ENCODE measurements at regions of chr13 and their contacts with region 1.

Region 1: DNA sequence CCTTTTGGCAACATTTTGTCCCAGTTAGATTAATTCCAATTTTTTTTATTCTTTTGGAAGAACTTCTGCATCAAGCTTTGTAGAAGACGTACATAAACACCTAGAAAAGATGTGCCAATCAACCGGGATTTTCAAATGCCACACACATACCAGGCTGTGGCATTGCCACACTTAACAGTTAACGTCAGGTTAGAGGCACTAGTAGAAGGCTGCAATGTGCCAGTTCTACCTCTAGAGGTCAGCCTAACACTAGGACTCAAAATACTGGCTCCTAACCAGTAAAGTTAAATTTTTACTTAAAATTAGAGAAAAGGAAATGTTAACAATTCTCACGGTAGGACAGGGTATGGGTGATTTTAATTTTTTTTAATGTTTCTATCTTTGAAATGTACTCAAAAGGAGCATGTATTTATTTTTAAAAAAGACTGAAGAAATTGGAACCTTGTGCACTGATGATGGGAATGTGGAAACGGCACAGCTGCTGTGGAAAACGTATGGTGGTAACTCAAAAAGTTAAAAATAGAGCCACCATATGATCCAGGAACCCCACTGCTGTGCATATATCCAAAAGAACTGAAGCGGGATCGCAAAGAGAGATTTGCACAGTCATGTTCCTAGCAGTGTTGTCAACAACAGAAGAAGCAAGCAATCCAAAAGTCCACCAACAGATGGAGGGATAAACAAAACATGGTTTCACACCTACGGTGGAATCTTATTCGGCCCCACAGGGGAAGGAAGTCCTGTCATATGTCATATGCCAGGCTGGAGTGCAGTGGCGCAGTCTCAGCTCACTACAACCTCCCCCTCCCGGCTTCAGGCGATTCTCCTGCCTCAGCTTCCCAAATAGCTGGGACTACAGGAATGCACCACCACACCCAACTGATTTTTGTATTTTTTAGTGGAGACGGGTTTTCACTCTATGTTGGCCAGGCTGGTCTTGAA is 30.3 kb downstream of the CRYL1 start:
- DNase-seq: peak; percentile 76
- H3K4me3 ChIP-seq: no peak overlapping the region
- H3K27ac ChIP-seq: peak overlapping the region; percentile 34
- H3K4me1 ChIP-seq: peaks cover 4% of the 10 kb centered on the region
- H3K27me3 ChIP-seq: no peaks in the 10 kb centered on the region
- CTCF ChIP-seq: peak; percentile 73
- POLR2A ChIP-seq: no peak

Region 2: DNA sequence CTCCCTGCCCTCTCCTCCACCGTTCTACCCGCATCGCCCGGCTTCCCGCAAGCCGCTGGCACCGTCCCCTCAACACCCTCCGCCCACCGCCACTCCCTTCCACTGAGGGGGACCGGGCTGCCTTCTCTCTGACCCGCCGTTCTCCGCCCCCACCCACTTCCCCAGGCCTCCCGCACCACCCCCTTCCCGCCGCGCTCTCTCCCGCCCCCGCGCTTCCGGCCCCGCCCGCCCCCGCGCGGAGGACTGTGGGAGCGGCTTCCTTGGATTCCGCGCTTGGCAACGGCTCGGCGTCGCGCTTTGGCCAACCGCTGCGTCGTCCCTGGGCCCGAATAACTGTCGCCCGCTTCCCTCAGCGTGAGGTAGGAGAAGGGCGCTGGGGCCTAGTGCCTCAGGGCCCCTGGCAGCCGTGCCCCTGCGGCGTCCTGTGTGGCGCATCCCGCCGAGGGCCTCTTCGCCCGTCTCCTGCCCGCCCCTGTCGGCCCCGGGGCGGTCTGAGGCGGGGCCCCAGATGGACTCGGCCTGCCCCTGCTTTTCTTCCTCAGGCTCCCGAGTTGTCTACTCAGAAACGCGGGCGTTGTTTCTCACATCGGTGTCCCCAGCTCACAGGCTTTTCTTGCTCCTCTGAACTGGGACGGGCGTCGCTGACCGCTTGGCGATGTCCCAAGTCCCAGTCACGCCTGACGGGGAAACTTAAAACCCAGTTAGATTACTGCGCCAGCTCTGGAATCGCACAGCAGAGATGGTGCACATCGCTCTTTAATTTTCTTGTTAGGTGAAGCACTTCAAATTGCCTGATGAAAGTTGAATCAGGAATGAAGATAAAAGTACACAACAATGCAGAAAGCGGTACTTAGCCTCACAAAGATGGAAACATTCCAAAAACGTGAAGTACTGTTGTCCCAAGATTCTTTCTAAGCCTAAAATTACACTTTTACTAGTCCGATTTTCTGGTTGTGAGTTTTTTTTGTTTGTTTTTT is 71.8 kb after region 1 on chr13 and contains the start of gene IFT88:
- CTCF ChIA-PET with region 1: interaction called, 3 read pairs
- POLR2A ChIA-PET with region 1: no interaction called
- dilution Hi-C with region 1: no loop called
- intact Hi-C with region 1: loop called (anchors 2 kb)
- DNase-seq: peak; percentile 90
- H3K4me3 ChIP-seq: peak within 1 kb of the TSS; percentile 22 to 89 (median 70)
- H3K27ac ChIP-seq: peak within 1 kb of the TSS; percentile 85
- H3K4me1 ChIP-seq: peaks cover 8% of the 10 kb centered on the region
- H3K27me3 ChIP-seq: no peaks in the 10 kb centered on the region
- CTCF ChIP-seq: no peak
- POLR2A ChIP-seq: peak; percentile 57
- total RNA-seq, gene IFT88: 9.1 and 13.7 TPM in 2 replicates

Region 3: DNA sequence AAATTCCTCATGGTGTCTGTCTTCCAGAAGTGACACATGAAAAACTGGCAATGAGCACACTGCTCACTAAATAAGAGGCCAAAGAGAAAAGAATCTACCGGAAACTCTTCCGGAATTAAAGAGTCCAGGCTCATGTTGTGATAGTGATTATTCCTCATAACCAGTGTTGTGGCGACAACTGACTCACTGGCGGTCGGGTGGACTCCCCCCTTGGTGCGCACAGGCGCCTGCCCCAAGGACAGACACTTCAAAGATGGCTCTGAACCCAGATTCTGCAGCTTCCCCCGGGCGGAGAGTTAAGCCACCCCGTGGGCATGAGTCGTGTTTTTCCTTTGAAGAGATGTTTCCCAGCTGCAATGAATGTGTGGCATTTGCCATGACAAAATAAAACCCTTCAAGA is 218.4 kb after region 1 on chr13:
- CTCF ChIA-PET with region 1: interaction called, 43 read pairs
- POLR2A ChIA-PET with region 1: no interaction called
- dilution Hi-C with region 1: no loop called
- intact Hi-C with region 1: loop called (anchors 1 kb)
- DNase-seq: peak; percentile 38
- H3K4me3 ChIP-seq: no peak overlapping the region
- H3K27ac ChIP-seq: peak overlapping the region; percentile 56
- H3K4me1 ChIP-seq: peaks cover 38% of the 10 kb centered on the region
- H3K27me3 ChIP-seq: no peaks in the 10 kb centered on the region
- CTCF ChIP-seq: no peak
- POLR2A ChIP-seq: no peak

Region 4: DNA sequence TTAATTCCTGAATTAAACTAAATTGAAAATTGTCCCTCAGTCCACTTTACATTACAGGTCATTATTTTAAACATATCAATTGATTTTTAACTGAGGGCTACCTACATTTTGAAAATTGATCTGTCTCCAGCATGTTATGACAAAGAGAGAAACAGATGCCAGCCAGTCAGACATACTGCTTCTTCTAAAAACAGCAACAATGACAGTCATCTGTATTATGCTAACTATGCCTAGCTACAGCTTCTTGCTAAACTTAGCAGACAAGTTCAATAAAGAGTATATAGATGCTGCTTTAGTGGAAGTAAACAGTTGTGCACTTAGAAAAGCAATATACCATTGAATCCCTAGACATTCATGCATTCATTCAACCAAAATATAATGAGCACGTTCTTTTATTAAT is 327.1 kb after region 1 on chr13:
- CTCF ChIA-PET with region 1: interaction called, 6 read pairs
- POLR2A ChIA-PET with region 1: no interaction called
- dilution Hi-C with region 1: no loop called
- intact Hi-C with region 1: loop called (anchors 2 kb)
- DNase-seq: no peak
- H3K4me3 ChIP-seq: no peak overlapping the region
- H3K27ac ChIP-seq: no peak overlapping the region
- H3K4me1 ChIP-seq: no peaks in the 10 kb centered on the region
- H3K27me3 ChIP-seq: no peaks in the 10 kb centered on the region
- CTCF ChIP-seq: no peak
- POLR2A ChIP-seq: no peak

Region 5: DNA sequence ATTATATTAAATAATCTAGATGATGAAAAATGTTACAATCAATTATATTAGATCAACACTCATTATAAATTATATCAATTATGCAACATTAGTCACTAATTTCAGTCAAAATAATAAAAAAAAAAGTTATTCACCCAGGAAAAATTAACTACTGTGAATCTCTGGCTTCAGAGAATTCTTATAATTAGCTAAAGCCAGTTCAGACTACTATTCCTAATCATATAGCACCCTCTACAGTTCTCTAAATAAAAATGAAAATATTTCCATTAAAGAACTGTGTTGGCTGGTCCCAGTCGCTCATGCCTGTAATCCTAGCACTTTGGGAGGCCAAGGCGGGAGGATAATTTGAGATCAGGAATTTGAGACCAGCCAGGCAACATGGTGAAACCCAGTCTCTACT is 374.2 kb after region 1 on chr13:
- CTCF ChIA-PET with region 1: interaction called, 40 read pairs
- POLR2A ChIA-PET with region 1: no interaction called
- dilution Hi-C with region 1: no loop called
- intact Hi-C with region 1: loop called (anchors 1 kb)
- DNase-seq: peak; percentile 30
- H3K4me3 ChIP-seq: no peak overlapping the region
- H3K27ac ChIP-seq: no peak overlapping the region
- H3K4me1 ChIP-seq: peaks cover 16% of the 10 kb centered on the region
- H3K27me3 ChIP-seq: no peaks in the 10 kb centered on the region
- CTCF ChIP-seq: no peak
- POLR2A ChIP-seq: no peak

Measured in endothelial cell of umbilical vein (primary cell).